ENCODE measurements at regions of chr18 and their contacts with region 1.

Region 1: GRCh38 chr18:54983041-54983686 is 23.9 kb upstream of the CCDC68 start:
- DNase-seq: no peak
- ATAC-seq: peak; percentile 82
- H3K4me3 Mint-ChIP-seq: no peak overlapping the region
- H3K27ac Mint-ChIP-seq: no peak overlapping the region
- H3K4me1 Mint-ChIP-seq: no peaks in the 10 kb centered on the region
- H3K27me3 Mint-ChIP-seq: no peaks in the 10 kb centered on the region
- CTCF ChIP-seq: peak; percentile 69

Region 2: GRCh38 chr18:54679318-54680149 is 303.6 kb before region 1 on chr18:
- CTCF ChIA-PET with region 1: interaction called, 10 read pairs
- POLR2A ChIA-PET with region 1: no interaction called
- DNase-seq: no peak
- ATAC-seq: peak; percentile 69
- H3K4me3 Mint-ChIP-seq: no peak overlapping the region
- H3K27ac Mint-ChIP-seq: no peak overlapping the region
- H3K4me1 Mint-ChIP-seq: peaks cover 2% of the 10 kb centered on the region; the same call in 1 of the 2 replicates
- H3K27me3 Mint-ChIP-seq: no peaks in the 10 kb centered on the region
- CTCF ChIP-seq: no peak

Region 3: GRCh38 chr18:55289775-55290174 is 306.6 kb after region 1 on chr18:
- CTCF ChIA-PET with region 1: no interaction called
- POLR2A ChIA-PET with region 1: no interaction called
- DNase-seq: no peak
- ATAC-seq: no peak
- H3K4me3 Mint-ChIP-seq: no peak overlapping the region
- H3K27ac Mint-ChIP-seq: no peak overlapping the region
- H3K4me1 Mint-ChIP-seq: peaks cover 40% of the 10 kb centered on the region
- H3K27me3 Mint-ChIP-seq: no peaks in the 10 kb centered on the region
- CTCF ChIP-seq: no peak